Activated CD8-positive, alpha-beta T cell treated with anti-CD3 and anti-CD28 coated beads, Interleukin-2, amount 10 ng/mL, durations not matched to agents 7 days and 5 days (primary cell): ENCODE measurements at regions of chr1 and their contacts with region 1.

Region 1: DNA sequence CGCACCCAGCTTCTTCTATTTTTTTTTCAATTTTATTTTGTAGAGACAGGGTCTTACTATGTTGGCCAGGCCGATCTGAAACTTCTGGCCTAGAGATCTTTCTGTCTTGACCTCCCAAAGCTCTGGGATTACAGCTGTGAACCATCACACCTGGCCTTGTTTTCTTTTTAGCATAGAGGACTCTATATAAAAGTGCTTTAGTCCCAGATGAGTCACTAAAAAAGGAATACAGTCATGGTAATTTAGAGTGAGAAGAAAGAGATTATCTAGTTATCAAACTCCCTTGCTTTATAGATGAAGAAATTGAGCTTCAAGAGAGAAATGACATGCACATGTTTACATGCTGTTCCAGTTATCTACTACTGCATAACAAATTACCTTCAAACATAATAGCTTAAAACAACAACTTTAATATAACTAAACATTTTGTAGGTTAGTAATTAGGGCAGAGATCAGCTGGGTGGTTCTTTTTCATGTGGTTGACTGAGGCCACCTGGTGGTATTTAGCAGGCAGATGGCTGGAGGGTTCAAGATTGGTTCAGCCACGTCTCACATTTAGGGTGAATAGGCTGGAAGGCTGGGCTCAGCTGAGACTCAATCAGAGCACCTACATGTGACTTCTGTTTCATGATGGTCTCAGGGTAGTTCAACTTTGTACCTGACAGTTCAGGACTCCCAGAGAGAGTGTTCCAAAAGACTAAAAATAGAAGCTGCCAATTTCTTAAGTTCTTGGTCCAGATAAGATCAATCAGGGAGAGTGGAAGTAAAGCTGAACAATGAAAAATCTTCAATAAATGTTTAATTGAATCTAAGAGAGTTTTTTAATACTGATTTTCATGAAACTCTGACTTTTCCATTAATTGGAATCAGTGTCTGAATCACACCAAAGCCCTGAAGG is 16.9 kb upstream of the MTF2 start:
- DNase-seq: peak; percentile 61
- ATAC-seq: peak; percentile 76
- H3K4me3 Mint-ChIP-seq: no peak overlapping the region
- H3K27ac Mint-ChIP-seq: no peak overlapping the region
- H3K4me1 Mint-ChIP-seq: peaks cover 2% of the 10 kb centered on the region
- H3K27me3 Mint-ChIP-seq: peaks cover 27% of the 10 kb centered on the region

Region 2: DNA sequence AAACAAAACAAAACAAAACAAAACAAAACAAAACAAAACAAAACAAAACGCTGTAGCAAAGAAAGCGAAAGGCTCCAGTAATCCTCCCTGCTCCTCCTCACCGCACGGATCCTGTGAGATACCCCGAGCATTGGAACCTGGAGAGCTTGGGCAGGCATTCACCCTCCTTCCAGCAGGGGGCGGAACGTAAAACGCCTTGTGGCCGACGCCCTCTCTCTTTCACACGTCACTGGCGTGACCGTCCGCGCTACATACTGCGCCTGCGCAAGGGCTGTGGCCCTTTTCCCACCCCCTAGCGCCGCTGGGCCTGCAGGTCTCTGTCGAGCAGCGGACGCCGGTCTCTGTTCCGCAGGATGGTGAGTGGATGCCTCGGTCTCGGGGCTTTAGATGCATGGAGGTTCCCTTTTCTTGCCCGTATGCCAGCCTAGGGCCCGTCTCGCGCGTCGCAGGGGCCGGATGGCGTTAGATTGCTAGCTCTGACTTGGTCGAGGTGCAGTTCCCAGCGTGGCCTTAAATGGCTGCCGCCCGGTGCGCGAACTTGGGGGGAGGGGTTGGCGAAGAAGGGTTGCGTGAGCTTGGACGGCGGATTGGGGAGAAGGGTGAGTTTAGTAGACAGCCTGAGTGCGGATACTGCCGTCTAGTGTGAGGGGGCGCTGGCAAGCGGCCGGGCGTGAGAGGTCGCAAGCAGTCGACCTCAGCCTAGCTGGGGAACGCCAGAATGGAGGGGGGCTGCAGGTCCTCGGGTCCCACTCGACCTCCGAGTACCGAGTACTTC is 230.2 kb before region 1 on chr1 and contains the start of gene RPL5:
- CTCF ChIA-PET with region 1: interaction called, 10 read pairs
- POLR2A ChIA-PET with region 1: no interaction called
- DNase-seq: peak; percentile 98
- ATAC-seq: peak; percentile 91
- H3K4me3 Mint-ChIP-seq: peak within 1 kb of the TSS; percentile 96
- H3K27ac Mint-ChIP-seq: peak within 1 kb of the TSS; percentile 98
- H3K4me1 Mint-ChIP-seq: peaks cover 43% of the 10 kb centered on the region
- H3K27me3 Mint-ChIP-seq: no peaks in the 10 kb centered on the region
- total RNA-seq, gene RPL5: 816 to 821 TPM

Region 3: DNA sequence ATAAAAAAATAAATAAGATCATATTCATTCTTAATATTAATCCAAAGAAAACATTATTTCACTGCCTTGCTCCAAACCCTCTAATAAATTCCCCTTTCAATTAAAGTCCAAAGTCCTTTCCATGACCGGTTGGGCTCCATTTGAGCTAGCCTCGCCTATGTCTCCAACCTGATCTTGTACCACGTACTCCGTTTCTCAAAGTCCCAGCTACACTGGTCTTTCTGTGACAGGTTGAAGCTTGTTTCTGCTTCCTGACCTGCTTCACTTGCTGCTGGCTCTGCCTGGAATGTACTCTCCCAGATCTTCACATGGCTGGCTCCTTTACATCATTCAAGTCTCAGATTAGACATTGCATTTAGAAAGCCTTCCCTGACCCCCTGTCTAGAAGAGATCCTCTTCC is 213.9 kb before region 1 on chr1:
- CTCF ChIA-PET with region 1: no interaction called
- POLR2A ChIA-PET with region 1: no interaction called
- DNase-seq: no peak
- ATAC-seq: no peak
- H3K4me3 Mint-ChIP-seq: no peak overlapping the region
- H3K27ac Mint-ChIP-seq: no peak overlapping the region
- H3K4me1 Mint-ChIP-seq: no peaks in the 10 kb centered on the region
- H3K27me3 Mint-ChIP-seq: no peaks in the 10 kb centered on the region

Region 4: GRCh38 chr1:93021539-93022134 is 40.5 kb before region 1 on chr1:
- CTCF ChIA-PET with region 1: interaction called, 47 read pairs
- POLR2A ChIA-PET with region 1: interaction called, 3 read pairs
- DNase-seq: peak; percentile 31
- ATAC-seq: peak; percentile 80
- H3K4me3 Mint-ChIP-seq: no peak overlapping the region
- H3K27ac Mint-ChIP-seq: no peak overlapping the region
- H3K4me1 Mint-ChIP-seq: peaks cover 3% of the 10 kb centered on the region
- H3K27me3 Mint-ChIP-seq: peaks cover 29% of the 10 kb centered on the region

Region 5: DNA sequence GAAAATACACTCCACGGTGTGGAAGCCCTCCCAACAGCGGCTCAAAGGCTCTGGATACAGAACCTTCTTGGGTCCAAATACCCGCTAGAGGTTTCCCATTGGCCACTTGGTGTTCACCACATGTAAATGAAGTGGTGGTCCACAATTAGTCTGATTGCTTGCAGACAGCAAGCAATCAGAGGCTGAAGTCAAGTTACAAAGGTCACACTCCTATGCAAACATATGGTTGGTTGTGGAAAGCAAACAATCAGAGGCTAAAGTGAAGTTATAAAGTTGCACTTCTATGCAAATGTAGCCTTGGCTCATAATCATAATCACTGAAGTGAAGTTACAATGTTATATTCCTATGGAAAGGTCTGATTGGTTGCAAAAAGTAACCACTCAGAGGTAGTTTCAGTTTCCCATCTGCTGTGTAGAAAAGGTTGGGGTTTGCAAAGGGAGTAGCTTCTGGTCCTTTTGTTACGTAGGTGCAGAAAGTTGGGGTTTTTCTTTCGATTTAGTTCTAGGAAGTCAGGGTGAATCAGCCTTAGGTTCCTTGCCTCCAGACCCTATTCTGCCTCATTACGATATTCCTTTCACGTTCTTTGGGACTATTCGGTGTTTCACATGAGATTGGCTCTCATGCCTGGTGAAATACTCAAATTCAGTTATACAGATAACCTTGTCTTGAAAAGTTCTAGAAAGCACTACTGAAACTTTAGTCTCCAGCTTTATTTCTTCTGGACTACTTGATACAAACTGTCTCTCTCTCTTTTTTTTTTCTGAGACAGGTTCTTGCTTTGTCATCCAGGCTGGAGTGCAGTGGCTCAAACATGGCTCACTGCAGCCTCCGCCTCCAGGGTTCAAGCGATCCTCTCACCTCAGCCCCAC is 19.7 kb before region 1 on chr1:
- CTCF ChIA-PET with region 1: interaction called, 14 read pairs
- POLR2A ChIA-PET with region 1: no interaction called
- DNase-seq: peak; percentile 67
- ATAC-seq: peak; percentile 98
- H3K4me3 Mint-ChIP-seq: peak overlapping the region; percentile 77
- H3K27ac Mint-ChIP-seq: peak overlapping the region; percentile 93
- H3K4me1 Mint-ChIP-seq: peaks cover 31% of the 10 kb centered on the region
- H3K27me3 Mint-ChIP-seq: no peaks in the 10 kb centered on the region

Region 6: DNA sequence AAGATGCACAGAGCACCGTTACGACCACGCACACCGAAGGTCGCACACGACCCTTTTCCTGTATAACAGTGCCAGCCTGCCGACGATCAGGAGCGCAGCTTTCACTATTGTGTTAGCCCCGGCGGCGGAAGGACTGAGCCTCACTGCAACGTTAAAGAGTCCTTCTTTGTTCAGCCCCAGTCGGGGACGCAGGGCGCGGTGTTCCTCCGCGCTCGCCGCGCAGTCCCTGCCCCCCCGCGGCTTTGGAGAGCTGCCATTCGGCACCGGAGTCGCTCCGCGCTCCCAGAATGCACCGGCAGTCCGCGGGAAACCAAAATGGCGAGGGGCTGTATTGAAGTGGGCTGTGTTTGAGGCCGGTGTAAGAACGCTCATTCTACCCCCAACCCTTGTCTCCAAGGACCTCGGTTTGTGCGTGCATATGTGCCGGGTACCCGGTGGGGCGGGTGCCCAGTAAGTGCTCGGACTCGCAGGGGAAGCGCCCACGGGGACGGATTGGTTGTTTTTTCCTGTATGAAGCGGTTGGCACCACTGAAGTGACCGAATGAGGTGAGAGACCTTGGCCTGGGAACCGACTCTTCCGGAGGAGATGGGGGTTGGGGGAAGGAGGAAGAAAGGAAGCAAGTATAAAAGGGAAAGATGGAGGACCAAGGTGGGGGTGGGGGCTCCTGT is 17.0 kb after region 1 on chr1 and contains the start of gene MTF2:
- CTCF ChIA-PET with region 1: interaction called, 11 read pairs
- POLR2A ChIA-PET with region 1: interaction called, 12 read pairs
- DNase-seq: peak; percentile 96
- ATAC-seq: peak; percentile 94
- H3K4me3 Mint-ChIP-seq: peak within 1 kb of the TSS; percentile 97
- H3K27ac Mint-ChIP-seq: peak within 1 kb of the TSS; percentile 98
- H3K4me1 Mint-ChIP-seq: peaks cover 37% of the 10 kb centered on the region
- H3K27me3 Mint-ChIP-seq: peaks cover 2% of the 10 kb centered on the region
- total RNA-seq, gene MTF2: 56.4 to 63.2 TPM